GM10248 (cell line): ENCODE measurements at regions of chr14 and their contacts with region 1.

Region 1: DNA sequence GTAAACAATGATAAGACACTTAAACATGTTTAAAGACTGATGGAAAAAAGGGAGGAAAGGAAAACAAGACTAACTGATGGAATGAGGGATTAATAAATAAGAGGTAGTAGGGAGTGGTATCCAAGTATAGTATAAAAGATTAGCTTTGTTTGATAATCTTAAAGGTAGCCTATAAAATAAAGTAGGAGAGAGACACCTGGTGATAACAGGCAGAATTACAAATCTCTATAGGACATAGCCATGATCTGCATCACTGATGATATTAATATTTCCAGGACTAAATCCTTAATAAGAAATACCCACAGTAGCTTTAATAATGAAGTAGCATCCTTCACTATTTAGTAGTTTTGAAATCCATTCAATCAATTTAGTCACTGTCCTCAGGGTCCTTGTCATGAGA is 30.4 kb downstream of the DLGAP5 start:
- DNase-seq: peak; percentile 44
- CTCF ChIP-seq: peak; percentile 29

Region 2: GRCh38 chr14:55019968-55020554 is 140.9 kb before region 1 on chr14:
- CTCF ChIA-PET with region 1: no interaction called
- POLR2A ChIA-PET with region 1: no interaction called
- DNase-seq: no peak
- CTCF ChIP-seq: no peak

Region 3: GRCh38 chr14:55088356-55088755 is 72.6 kb before region 1 on chr14:
- CTCF ChIA-PET with region 1: interaction called, 57 read pairs
- POLR2A ChIA-PET with region 1: no interaction called
- DNase-seq: no peak
- CTCF ChIP-seq: no peak

Region 4: GRCh38 chr14:55094321-55095157 is 66.5 kb before region 1 on chr14:
- CTCF ChIA-PET with region 1: interaction called, 57 read pairs
- POLR2A ChIA-PET with region 1: no interaction called
- DNase-seq: no peak
- CTCF ChIP-seq: no peak

Region 5: GRCh38 chr14:55102141-55102621 is 58.8 kb before region 1 on chr14:
- CTCF ChIA-PET with region 1: interaction called, 11 read pairs
- POLR2A ChIA-PET with region 1: no interaction called
- DNase-seq: peak; percentile 77
- CTCF ChIP-seq: no peak

Region 6: DNA sequence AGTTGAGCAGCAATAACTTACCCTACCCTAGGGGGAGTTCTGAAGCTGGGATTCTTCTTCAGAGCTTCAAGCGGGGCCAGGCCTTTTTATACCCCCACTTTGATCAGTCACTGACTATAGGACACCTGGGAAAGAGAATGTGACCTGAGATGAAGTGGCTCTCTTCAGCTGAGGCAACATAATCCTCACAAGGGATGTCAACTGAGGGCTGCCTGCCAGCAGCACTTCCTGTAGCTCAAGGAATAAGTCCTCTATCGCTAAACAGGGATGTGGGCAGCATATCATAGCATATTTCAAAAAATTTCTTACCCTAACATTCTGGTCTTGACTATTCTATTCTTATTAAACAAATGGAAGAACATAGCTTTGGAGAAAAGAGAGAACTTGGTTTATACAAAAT is 14.6 kb before region 1 on chr14:
- CTCF ChIA-PET with region 1: interaction called, 31 read pairs
- POLR2A ChIA-PET with region 1: no interaction called
- DNase-seq: no peak
- CTCF ChIP-seq: no peak

Region 7: DNA sequence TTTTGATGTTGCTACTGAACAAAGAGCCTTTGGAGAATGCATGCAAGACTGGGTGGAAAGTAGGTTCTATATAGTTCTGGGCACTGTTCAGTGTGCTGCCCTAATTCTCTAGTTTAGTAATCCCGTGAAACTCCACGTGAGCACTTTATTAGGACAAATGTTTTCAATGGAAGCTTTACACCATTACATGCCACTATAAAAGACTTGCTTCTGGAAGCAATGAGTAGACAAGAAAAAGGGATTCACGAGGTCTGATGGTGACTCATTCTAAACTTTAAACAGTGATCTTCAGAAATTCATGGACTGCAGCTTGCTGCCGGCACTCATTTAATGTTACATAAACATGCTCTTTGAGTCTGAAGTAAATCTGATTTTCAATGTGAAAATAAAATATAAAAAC is 228.3 kb after region 1 on chr14:
- CTCF ChIA-PET with region 1: no interaction called
- POLR2A ChIA-PET with region 1: no interaction called
- DNase-seq: no peak
- CTCF ChIP-seq: no peak